Esophagus muscularis mucosa (tissue), 4 donors: ENCODE measurements at regions of chr10 and their contacts with region 1.

Region 1: DNA sequence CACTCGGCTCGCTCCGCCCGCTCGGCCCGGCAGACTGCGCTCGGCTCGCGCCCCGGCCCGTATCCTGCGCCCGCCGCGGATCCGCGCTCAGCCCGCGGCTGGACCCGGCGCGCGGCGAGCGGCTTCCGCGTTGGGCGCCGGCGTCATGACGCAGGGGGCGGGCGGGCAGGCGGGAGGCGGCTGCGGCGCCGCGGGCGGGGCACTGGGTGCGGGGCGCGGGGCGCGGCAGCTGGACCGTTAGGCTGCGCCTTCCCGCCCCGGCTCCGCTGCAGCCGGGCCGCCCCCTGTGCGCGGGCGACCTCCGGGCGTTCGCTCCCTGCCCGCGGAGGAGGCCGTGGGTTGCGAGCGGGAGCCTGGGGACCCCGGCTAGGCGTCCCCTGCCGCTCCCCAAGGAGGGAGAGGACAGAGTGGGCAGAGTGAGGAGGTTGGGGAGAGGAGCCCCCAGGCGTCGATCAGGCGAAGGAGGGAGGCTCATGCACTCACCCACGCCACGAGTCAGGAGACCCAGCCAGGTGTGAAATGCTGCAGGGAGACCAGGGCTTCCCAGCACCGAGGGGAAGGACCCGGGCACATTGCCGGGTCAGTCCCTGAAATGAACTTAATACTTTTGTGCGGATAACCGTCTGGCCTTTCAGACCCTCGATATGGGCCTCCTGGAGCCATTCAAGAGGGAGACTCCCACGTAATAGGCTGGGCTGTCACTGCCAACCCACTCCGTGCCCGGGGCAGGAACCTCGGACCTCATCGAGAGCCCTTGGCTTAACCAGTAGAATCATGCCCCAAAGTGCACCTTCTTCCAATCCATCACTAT is at the start of gene PIP4K2A:
- DNase-seq: no peak
- H3K4me3 ChIP-seq: peak within 1 kb of the TSS; percentile 75 to 99 (median 95)
- H3K27ac ChIP-seq: peak within 1 kb of the TSS; percentile 85 to 91 (median 88)
- H3K4me1 ChIP-seq: peaks cover 16 to 35% (median 33%) of the 10 kb centered on the region in 4 donors
- H3K27me3 ChIP-seq: no peaks in the 10 kb centered on the region
- CTCF ChIP-seq: no peak
- EP300 ChIP-seq: no peak
- POLR2A ChIP-seq: no peak
- total RNA-seq, gene PIP4K2A: 26.2 to 34.3 (median 32.5) TPM

Region 2: GRCh38 chr10:22003079-22003913 is 711.4 kb before region 1 on chr10 and contains the start of gene DNAJC1:
- intact Hi-C with region 1: loop called (anchors 10 kb)
- DNase-seq: peak; percentile 99
- H3K4me3 ChIP-seq: peak within 1 kb of the TSS; percentile 71 to 93 (median 80)
- H3K27ac ChIP-seq: peak within 1 kb of the TSS; percentile 93 to 99 (median 94)
- H3K4me1 ChIP-seq: peaks cover 0 to 33% (median 26%) of the 10 kb centered on the region in 4 donors
- H3K27me3 ChIP-seq: no peaks in the 10 kb centered on the region
- CTCF ChIP-seq: peak in 1 of 3 experiments; percentile 28
- EP300 ChIP-seq: no peak
- POLR2A ChIP-seq: peak; percentile 83
- total RNA-seq, gene DNAJC1: 46.5 to 70.6 (median 61.5) TPM

Region 3: GRCh38 chr10:22251751-22252223 is 462.9 kb before region 1 on chr10:
- intact Hi-C with region 1: loop called (anchors 10 kb)
- DNase-seq: peak; percentile 94
- H3K4me3 ChIP-seq: peak overlapping the region; percentile 80 to 87 (median 84)
- H3K27ac ChIP-seq: peak overlapping the region; percentile 90 to 97 (median 96)
- H3K4me1 ChIP-seq: peaks cover 0 to 19% (median 10%) of the 10 kb centered on the region in 4 donors
- H3K27me3 ChIP-seq: no peaks in the 10 kb centered on the region
- CTCF ChIP-seq: no peak
- EP300 ChIP-seq: no peak
- POLR2A ChIP-seq: no peak

Region 4: GRCh38 chr10:22325272-22326144 is 389.2 kb before region 1 on chr10:
- intact Hi-C with region 1: loop called (anchors 10 kb)
- DNase-seq: no peak
- H3K4me3 ChIP-seq: peak overlapping the region; percentile 63 to 80 (median 66)
- H3K27ac ChIP-seq: peak overlapping the region; percentile 73 to 85 (median 82)
- H3K4me1 ChIP-seq: peaks cover 37 to 47% (median 43%) of the 10 kb centered on the region in 4 donors
- H3K27me3 ChIP-seq: no peaks in the 10 kb centered on the region
- CTCF ChIP-seq: peak in 1 of 3 experiments; percentile 6
- EP300 ChIP-seq: no peak
- POLR2A ChIP-seq: no peak

Region 5: DNA sequence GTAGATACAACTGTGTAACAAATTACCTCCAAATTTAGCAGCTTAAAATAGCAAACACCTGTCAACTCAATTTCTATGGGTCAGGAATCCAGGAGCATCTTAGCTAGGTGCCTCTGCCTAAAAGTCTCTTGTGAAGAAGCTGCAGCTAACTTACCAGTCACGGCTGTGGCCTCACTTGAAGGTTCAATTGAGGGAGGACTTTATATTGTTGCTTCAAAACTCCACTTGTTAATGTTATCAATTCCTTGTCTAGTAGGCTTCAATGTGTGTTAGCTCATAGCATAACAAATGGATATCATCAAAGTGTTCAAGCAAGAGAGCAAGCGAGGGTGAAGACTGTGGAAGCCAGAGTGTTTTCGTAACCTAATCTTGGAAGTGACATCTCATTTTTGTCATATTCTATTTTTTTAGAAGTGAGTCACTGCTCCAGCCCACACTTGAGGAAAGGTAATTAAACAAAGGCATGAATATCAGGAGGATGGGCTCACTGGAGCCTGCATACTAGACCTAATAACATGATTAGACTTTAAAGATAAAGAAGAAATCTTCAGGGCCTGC is 196.4 kb before region 1 on chr10:
- intact Hi-C with region 1: no loop called
- DNase-seq: no peak
- H3K4me3 ChIP-seq: no peak overlapping the region
- H3K27ac ChIP-seq: no peak overlapping the region
- H3K4me1 ChIP-seq: no peaks in the 10 kb centered on the region
- H3K27me3 ChIP-seq: peaks cover 0 to 13% (median 0%) of the 10 kb centered on the region in 4 donors
- CTCF ChIP-seq: no peak
- EP300 ChIP-seq: no peak
- POLR2A ChIP-seq: no peak

Region 6: DNA sequence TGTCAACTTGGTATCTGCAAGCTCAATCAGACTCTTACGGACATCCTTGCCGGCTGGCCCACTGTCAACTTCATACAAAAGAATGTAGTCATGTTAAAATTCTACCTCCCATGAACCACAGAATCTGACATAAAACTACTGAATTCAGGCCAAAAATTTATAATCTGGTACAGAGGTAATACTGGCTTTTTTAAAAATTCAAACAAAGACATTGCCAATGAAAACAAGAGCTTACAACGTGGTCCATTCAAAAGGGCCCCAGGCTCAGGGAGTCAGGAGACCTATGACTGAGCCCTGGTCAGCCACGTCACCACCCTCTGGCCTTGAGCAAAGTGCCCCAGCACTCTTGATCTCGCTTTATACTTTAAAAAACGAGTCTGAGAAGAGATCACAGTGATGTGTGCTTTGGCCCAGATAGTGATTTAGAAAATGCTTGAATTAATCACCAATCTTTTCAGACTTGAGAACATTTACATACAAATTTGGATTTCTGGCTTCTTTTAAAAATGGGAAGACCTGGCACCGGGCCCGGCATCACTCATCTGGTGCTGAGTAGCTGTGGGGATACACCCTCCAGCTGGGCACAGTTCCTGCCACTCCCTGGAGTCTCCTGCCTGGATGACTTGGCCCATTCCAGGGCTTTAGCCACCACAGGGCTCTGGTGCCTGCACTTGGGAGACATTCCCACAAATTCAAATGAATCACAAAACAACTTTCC is 94.4 kb before region 1 on chr10:
- intact Hi-C with region 1: loop called (anchors 10 kb)
- DNase-seq: no peak
- H3K4me3 ChIP-seq: no peak overlapping the region
- H3K27ac ChIP-seq: peak overlapping the region; percentile 9 to 44 (median 24)
- H3K4me1 ChIP-seq: peaks cover 39 to 84% (median 77%) of the 10 kb centered on the region in 4 donors
- H3K27me3 ChIP-seq: no peaks in the 10 kb centered on the region
- CTCF ChIP-seq: no peak
- EP300 ChIP-seq: no peak
- POLR2A ChIP-seq: no peak

Region 7: GRCh38 chr10:22988581-22989360 is 274.1 kb after region 1 on chr10:
- intact Hi-C with region 1: loop called (anchors 10 kb)
- DNase-seq: no peak
- H3K4me3 ChIP-seq: no peak overlapping the region
- H3K27ac ChIP-seq: no peak overlapping the region
- H3K4me1 ChIP-seq: peaks cover 0 to 10% (median 8%) of the 10 kb centered on the region in 4 donors
- H3K27me3 ChIP-seq: no peaks in the 10 kb centered on the region
- CTCF ChIP-seq: peak; percentile 87 to 92 (median 90)
- EP300 ChIP-seq: no peak
- POLR2A ChIP-seq: no peak

Region 8: GRCh38 chr10:23391821-23392220 is 677.1 kb after region 1 on chr10:
- intact Hi-C with region 1: no loop called
- DNase-seq: no peak
- H3K4me3 ChIP-seq: no peak overlapping the region
- H3K27ac ChIP-seq: no peak overlapping the region
- H3K4me1 ChIP-seq: no peaks in the 10 kb centered on the region
- H3K27me3 ChIP-seq: no peaks in the 10 kb centered on the region
- CTCF ChIP-seq: no peak
- EP300 ChIP-seq: no peak
- POLR2A ChIP-seq: no peak